PC-3 (cell line): ENCODE measurements at regions of chr4 and their contacts with region 1.

Region 1: GRCh38 chr4:65670331-65671031 is at the start of gene EPHA5:
- DNase-seq: peak; percentile 78
- ATAC-seq: peak; percentile 80
- H3K4me3 ChIP-seq: peak within 1 kb of the TSS; percentile 70
- H3K27ac ChIP-seq: 0 out of 2 replicates have a peak within 1 kb of the TSS, but pooled peaks have one; percentile 4
- H3K4me1 ChIP-seq: peaks cover 44% of the 10 kb centered on the region
- H3K27me3 ChIP-seq: peaks cover 21% of the 10 kb centered on the region
- CTCF ChIP-seq: no peak
- total RNA-seq, gene EPHA5: 2.0 and 2.2 TPM in 2 replicates

Region 2: GRCh38 chr4:65353098-65353497 is 317.4 kb before region 1 on chr4:
- CTCF ChIA-PET with region 1: no interaction called
- POLR2A ChIA-PET with region 1: no interaction called
- intact Hi-C with region 1: no loop called
- DNase-seq: no peak
- ATAC-seq: no peak
- H3K4me3 ChIP-seq: no peak overlapping the region
- H3K27ac ChIP-seq: no peak overlapping the region
- H3K4me1 ChIP-seq: no peaks in the 10 kb centered on the region
- H3K27me3 ChIP-seq: no peaks in the 10 kb centered on the region
- CTCF ChIP-seq: no peak

Region 3: GRCh38 chr4:65416891-65417290 is 253.6 kb before region 1 on chr4:
- CTCF ChIA-PET with region 1: interaction called, 9 read pairs
- POLR2A ChIA-PET with region 1: no interaction called
- intact Hi-C with region 1: loop called (anchors 10 kb)
- DNase-seq: peak; percentile 82
- ATAC-seq: peak; percentile 97
- H3K4me3 ChIP-seq: peak overlapping the region; percentile 11; the same call in 1 of the 2 replicates
- H3K27ac ChIP-seq: peak overlapping the region; percentile 8; the same call in 1 of the 2 replicates
- H3K4me1 ChIP-seq: peaks cover 21% of the 10 kb centered on the region
- H3K27me3 ChIP-seq: no peaks in the 10 kb centered on the region
- CTCF ChIP-seq: no peak

Region 4: GRCh38 chr4:65508169-65508568 is 162.3 kb before region 1 on chr4:
- CTCF ChIA-PET with region 1: interaction called, 3 read pairs
- POLR2A ChIA-PET with region 1: no interaction called
- intact Hi-C with region 1: loop called (anchors 2 kb)
- DNase-seq: peak; percentile 98
- ATAC-seq: peak; percentile 72
- H3K4me3 ChIP-seq: 0 out of 2 replicates have a peak overlapping the region, but pooled peaks have one; percentile 12
- H3K27ac ChIP-seq: peak overlapping the region; percentile 79
- H3K4me1 ChIP-seq: peaks cover 46% of the 10 kb centered on the region
- H3K27me3 ChIP-seq: no peaks in the 10 kb centered on the region
- CTCF ChIP-seq: no peak

Region 5: GRCh38 chr4:65538571-65538970 is 131.9 kb before region 1 on chr4:
- CTCF ChIA-PET with region 1: no interaction called
- POLR2A ChIA-PET with region 1: no interaction called
- intact Hi-C with region 1: no loop called
- DNase-seq: peak; percentile 42
- ATAC-seq: peak; percentile 64
- H3K4me3 ChIP-seq: no peak overlapping the region
- H3K27ac ChIP-seq: no peak overlapping the region
- H3K4me1 ChIP-seq: peaks cover 6% of the 10 kb centered on the region; the same call in 1 of the 2 replicates
- H3K27me3 ChIP-seq: no peaks in the 10 kb centered on the region
- CTCF ChIP-seq: no peak

Region 6: DNA sequence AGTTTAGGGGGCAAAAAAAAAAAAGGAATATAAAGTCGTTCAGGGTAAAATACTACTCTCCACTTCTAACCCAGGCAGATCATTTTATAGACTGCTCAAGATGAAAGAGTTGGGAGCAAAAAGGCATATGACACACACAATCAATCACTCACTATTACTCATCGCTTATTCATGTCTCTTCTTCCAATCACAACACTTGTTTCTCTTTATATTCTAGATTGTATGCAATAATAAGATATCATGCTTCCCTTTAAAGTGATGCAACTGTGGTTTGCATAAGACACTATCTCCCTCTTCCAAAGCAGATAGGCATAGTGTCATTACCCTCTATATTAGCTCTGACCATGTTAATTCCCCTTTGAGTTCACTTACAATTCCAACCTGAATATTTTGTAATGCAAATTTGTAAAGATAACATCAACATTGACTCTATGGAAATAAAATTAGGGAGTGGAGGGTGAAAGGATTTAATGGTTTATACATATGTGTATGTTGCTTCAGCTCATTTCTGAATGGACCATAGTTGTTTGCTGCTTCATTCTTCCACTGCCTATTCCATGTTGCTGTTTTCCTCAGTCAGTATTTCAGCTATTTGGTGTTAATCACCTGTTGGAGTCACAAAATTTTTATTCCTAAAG is 154.8 kb after region 1 on chr4:
- CTCF ChIA-PET with region 1: no interaction called
- POLR2A ChIA-PET with region 1: no interaction called
- intact Hi-C with region 1: loop called (anchors 2 kb)
- DNase-seq: peak; percentile 91
- ATAC-seq: peak; percentile 86
- H3K4me3 ChIP-seq: no peak overlapping the region
- H3K27ac ChIP-seq: peak overlapping the region; percentile 41
- H3K4me1 ChIP-seq: peaks cover 26% of the 10 kb centered on the region
- H3K27me3 ChIP-seq: no peaks in the 10 kb centered on the region
- CTCF ChIP-seq: no peak

Region 7: DNA sequence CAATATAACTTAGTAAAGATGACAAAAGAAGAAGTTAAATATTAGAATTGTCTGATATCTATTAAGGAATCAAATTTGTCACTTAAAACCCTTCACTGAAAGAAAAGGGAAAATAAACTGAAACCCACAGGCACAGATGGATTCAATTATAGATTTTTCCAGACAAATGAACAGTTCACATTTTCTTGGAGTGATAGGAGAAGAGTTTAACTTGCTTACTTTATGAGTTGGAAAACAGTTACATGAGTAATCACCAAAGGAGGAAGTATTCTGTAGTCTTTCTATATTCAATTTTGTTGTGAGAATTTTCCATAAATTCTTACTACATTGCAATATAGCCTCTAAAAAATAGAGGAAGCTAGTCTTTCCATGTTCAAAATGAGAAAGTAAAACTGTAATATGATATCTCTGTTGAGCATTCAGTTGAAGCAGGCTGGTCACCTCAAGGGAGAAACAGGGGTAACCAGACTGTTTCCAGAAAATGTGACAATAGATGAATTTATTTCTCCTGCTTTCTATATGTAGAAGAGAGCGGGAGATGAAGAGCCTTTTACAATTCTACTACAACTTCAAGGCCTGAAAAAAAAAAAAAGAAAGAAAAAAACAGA is 330.1 kb after region 1 on chr4:
- CTCF ChIA-PET with region 1: no interaction called
- POLR2A ChIA-PET with region 1: interaction called, 3 read pairs
- intact Hi-C with region 1: loop called (anchors 5 kb)
- DNase-seq: peak; percentile 35
- ATAC-seq: peak; percentile 61
- H3K4me3 ChIP-seq: peak overlapping the region; percentile 69
- H3K27ac ChIP-seq: peak overlapping the region; percentile 11; the same call in 1 of the 2 replicates
- H3K4me1 ChIP-seq: peaks cover 4% of the 10 kb centered on the region; the same call in 1 of the 2 replicates
- H3K27me3 ChIP-seq: no peaks in the 10 kb centered on the region
- CTCF ChIP-seq: no peak

Region 8: DNA sequence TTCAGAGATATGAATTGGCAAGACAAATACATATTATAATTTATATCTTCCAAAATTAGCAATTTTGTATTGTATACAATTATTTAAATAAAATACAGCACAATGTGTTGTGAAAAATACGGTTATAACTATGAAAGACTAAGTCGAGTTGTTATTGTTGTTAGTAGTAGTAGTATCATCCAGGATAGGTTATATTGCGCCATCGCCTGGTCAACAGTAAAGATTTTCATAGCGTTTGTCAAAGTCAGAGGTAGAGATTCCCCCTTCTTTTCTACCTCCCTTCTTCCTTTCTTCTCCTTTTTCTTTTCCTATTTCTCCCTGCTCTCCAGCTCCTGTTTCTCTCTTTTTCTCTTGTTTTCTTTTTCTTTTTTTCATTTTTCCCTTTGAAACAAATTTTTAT is 498.9 kb after region 1 on chr4:
- CTCF ChIA-PET with region 1: interaction called, 3 read pairs
- POLR2A ChIA-PET with region 1: no interaction called
- intact Hi-C with region 1: loop called (anchors 10 kb)
- DNase-seq: peak; percentile 74
- ATAC-seq: peak; percentile 71
- H3K4me3 ChIP-seq: no peak overlapping the region
- H3K27ac ChIP-seq: no peak overlapping the region
- H3K4me1 ChIP-seq: no peaks in the 10 kb centered on the region
- H3K27me3 ChIP-seq: no peaks in the 10 kb centered on the region
- CTCF ChIP-seq: peak; percentile 88